Breast epithelium (tissue), 4 donors: ENCODE measurements at regions of chr2 and their contacts with region 1.

Region 1: DNA sequence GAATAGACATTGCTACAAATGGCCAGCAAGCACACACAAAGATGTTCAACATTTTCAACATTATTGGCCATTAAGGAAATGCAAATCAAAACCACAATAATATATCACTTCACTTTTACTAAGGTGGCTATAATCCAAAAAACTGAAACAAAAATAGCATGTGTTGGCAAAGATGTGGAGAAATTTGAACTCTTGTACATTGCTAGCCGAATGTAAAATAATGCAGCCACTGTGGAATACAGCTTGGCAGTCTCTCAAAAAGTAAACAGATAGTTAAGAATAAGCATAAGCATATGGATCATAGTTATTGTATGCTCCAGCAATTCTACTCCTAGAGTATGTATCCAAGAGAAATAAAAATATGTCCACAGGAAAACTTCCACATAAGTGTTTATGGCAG is 192.5 kb downstream of the EN1 start:
- DNase-seq: no peak
- H3K4me3 ChIP-seq: no peak overlapping the region
- H3K27ac ChIP-seq: no peak overlapping the region
- H3K4me1 ChIP-seq: no peaks in the 10 kb centered on the region
- H3K27me3 ChIP-seq: no peaks in the 10 kb centered on the region
- CTCF ChIP-seq: no peak
- POLR2A ChIP-seq: no peak

Region 2: GRCh38 chr2:118576109-118576855 is 78.7 kb before region 1 on chr2:
- intact Hi-C with region 1: no loop called
- DNase-seq: no peak
- H3K4me3 ChIP-seq: no peak overlapping the region
- H3K27ac ChIP-seq: no peak overlapping the region
- H3K4me1 ChIP-seq: no peaks in the 10 kb centered on the region
- H3K27me3 ChIP-seq: no peaks in the 10 kb centered on the region
- CTCF ChIP-seq: no peak
- POLR2A ChIP-seq: no peak

Region 3: DNA sequence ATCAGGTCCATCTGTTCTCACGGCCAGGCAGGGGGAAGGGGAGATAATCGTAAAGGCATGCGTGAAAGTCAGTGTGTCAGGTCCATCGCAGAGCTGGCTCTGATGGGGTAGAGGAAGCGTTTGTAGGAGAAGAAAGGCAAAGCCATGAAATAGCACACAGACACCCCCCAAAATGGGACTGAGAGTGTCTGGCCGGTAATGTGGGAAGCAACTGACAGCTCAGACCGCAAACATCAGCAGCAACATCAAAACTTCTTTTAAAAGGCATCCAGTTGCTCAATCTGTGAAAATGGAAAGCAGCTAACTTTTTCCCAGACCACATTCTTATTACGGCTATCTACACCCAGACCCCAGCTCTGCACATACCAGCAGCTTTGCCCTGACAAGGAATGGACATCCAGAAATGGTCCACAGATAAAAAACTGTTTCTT is 40.1 kb before region 1 on chr2:
- intact Hi-C with region 1: loop called (anchors 2 kb)
- DNase-seq: no peak
- H3K4me3 ChIP-seq: peak overlapping the region in 1 of 3 donors; percentile 3
- H3K27ac ChIP-seq: no peak overlapping the region
- H3K4me1 ChIP-seq: no peaks in the 10 kb centered on the region
- H3K27me3 ChIP-seq: peaks cover 0 to 19% of the 10 kb centered on the region in 2 donors
- CTCF ChIP-seq: no peak
- POLR2A ChIP-seq: no peak